Activated B cell treated with CpG ODN at 0.5 μM for 24 hours (primary cell): ENCODE measurements at regions of chr13 and their contacts with region 1.

Region 1: GRCh38 chr13:42271337-42272114 is 426 bp upstream of the AKAP11 start:
- DNase-seq: peak; percentile 85
- ATAC-seq: peak; percentile 83
- H3K4me3 Mint-ChIP-seq: peak overlapping the region; percentile 97
- H3K27ac Mint-ChIP-seq: peak overlapping the region; percentile 97
- H3K4me1 Mint-ChIP-seq: peaks cover 54% of the 10 kb centered on the region
- H3K27me3 Mint-ChIP-seq: no peaks in the 10 kb centered on the region
- CTCF ChIP-seq: no peak

Region 2: GRCh38 chr13:41132512-41133152 is 1138.9 kb before region 1 on chr13 and contains the start of gene KBTBD6:
- CTCF ChIA-PET with region 1: no interaction called
- POLR2A ChIA-PET with region 1: no interaction called
- intact Hi-C with region 1: loop called (anchors 1 kb)
- DNase-seq: peak; percentile 83
- ATAC-seq: peak; percentile 97
- H3K4me3 Mint-ChIP-seq: peak within 1 kb of the TSS; percentile 98
- H3K27ac Mint-ChIP-seq: peak within 1 kb of the TSS; percentile 91
- H3K4me1 Mint-ChIP-seq: peaks cover 47% of the 10 kb centered on the region
- H3K27me3 Mint-ChIP-seq: no peaks in the 10 kb centered on the region
- CTCF ChIP-seq: no peak
- total RNA-seq, gene KBTBD6: 5.1 and 6.0 TPM in 2 replicates

Region 3: GRCh38 chr13:41310963-41311606 is 960.4 kb before region 1 on chr13 and contains the start of gene NAA16:
- CTCF ChIA-PET with region 1: no interaction called
- POLR2A ChIA-PET with region 1: interaction called, 3 read pairs
- intact Hi-C with region 1: loop called (anchors 5 kb)
- DNase-seq: peak; percentile 98
- ATAC-seq: peak; percentile 92
- H3K4me3 Mint-ChIP-seq: peak within 1 kb of the TSS; percentile 96
- H3K27ac Mint-ChIP-seq: peak within 1 kb of the TSS; percentile 90
- H3K4me1 Mint-ChIP-seq: peaks cover 44% of the 10 kb centered on the region
- H3K27me3 Mint-ChIP-seq: no peaks in the 10 kb centered on the region
- CTCF ChIP-seq: no peak
- total RNA-seq, gene NAA16: 18.5 and 21.4 TPM in 2 replicates

Region 4: DNA sequence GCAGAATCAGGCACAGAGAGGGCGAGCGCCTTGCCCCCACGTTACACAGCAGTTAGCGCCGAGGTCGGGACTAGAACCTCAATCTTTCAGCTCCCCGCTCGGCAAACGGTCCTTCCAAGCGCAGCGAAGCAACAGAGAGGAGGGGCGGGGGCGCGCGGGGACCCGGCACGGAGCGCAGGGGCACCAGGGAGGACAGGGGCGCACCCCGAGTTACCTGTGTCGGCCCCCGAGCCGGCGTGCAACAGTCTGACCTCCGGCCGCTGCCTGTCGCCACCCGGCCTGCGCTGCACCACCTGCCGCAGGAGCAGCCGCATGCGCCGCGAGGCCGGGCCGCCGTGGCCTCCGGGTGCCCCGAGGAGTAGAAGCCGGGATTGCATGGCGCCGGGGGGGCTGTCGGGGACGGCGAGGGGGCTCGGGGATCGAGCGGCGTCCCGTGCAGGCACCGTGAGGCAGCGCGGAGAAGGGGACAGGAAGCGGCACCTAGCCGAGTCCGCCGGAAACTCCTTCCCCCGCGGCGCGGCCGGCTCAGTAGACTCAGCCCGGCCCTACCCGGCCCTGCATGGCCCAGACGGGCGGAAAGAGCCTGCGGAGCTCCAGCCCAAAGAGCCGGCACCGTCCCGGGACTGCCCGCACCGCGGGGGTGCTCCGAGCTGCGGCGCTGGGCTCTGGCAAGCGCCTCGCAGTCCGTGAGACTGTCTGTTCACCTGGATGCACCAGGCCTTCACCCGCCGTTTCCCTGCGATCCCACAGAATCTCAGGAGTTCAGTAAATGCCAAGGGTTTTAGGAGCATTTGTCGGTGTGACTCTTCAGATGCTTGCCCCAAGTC is 310.7 kb before region 1 on chr13 and contains the start of gene VWA8:
- CTCF ChIA-PET with region 1: no interaction called
- POLR2A ChIA-PET with region 1: interaction called, 3 read pairs
- intact Hi-C with region 1: loop called (anchors 2 kb)
- DNase-seq: peak; percentile 79
- ATAC-seq: peak; percentile 98
- H3K4me3 Mint-ChIP-seq: peak within 1 kb of the TSS; percentile 91
- H3K27ac Mint-ChIP-seq: peak within 1 kb of the TSS; percentile 66
- H3K4me1 Mint-ChIP-seq: peaks cover 26% of the 10 kb centered on the region
- H3K27me3 Mint-ChIP-seq: peaks cover 4% of the 10 kb centered on the region
- CTCF ChIP-seq: no peak
- total RNA-seq, gene VWA8: 16.5 and 21.7 TPM in 2 replicates

Region 5: DNA sequence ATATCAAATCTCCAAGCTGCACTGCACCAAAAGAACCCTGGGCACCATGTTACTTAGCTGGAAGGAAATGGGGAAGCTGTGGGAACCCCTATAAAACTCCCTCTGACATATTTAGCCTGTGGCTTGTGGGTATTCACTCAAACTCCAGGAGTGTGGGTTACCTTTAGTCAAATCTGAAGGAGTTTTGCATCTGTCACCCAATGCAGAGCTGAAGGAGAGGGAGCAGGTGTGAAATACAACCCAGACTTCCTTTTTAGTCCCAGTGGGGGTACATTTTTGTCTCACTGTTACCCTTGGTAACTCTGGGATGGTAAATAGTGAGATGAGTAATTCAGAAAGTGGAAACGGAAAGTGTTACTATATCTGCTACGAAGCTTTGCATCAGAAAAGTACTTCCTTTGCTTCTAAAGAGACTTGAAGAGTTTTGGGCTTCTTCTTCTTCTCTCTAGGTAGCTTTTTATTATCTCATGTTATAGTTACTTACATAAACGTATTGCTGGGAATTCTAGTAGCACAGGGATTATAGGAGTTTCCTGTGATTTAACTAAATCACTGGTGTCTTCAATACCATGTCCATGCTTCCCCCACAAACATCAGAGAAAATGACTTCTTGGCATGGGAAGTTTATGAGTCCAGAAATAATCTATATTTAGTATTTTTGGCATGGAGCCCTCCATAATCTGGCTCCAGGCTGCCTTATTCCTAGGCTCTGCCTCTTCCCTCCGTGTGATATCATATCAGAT is 106.3 kb after region 1 on chr13:
- CTCF ChIA-PET with region 1: no interaction called
- POLR2A ChIA-PET with region 1: interaction called, 47 read pairs
- intact Hi-C with region 1: loop called (anchors 1 kb)
- DNase-seq: no peak
- ATAC-seq: peak; percentile 74
- H3K4me3 Mint-ChIP-seq: peak overlapping the region; percentile 60
- H3K27ac Mint-ChIP-seq: peak overlapping the region; percentile 91
- H3K4me1 Mint-ChIP-seq: peaks cover 54% of the 10 kb centered on the region
- H3K27me3 Mint-ChIP-seq: no peaks in the 10 kb centered on the region
- CTCF ChIP-seq: no peak

Region 6: DNA sequence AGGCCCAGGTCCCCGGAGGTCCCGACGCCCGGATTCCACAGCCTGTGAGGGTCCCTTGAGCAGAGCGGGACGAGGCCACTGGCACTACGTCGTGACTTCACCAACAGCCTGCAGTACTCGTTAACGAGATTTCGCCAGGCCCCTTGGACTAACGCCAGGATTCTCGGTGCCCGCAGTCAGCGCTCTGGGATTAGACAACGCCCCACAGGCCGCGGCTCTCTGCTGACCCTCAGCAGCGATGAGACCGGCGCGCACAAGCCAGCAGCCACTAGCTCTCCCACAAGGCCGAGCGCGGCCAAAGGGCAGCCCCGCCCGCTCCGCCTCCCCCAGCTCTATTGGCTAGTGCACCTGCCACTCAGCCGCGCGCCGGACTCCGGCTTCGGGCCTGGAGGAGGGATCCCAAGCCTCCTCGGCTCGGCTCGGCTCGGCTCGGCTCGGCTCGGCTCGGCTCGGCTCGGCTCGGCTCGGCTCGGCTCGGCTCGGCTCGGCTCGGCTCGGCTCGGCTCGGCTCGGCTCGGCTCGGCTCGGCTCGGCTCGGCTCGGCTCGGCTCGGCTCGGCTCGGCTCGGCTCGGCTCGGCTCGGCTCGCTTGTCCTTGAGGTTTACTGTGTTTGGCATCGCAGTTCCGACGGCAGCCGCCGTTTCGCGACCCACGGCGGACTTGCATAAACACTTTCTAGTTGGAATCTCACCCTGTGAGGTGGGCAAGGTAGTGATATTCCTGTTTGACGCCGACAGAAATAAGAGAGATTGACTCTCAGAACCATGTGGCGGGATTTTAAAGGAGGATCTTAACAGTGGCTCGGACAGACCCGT is 1870.4 kb after region 1 on chr13:
- CTCF ChIA-PET with region 1: no interaction called
- POLR2A ChIA-PET with region 1: no interaction called
- intact Hi-C with region 1: loop called (anchors 10 kb)
- DNase-seq: peak; percentile 100
- ATAC-seq: peak; percentile 99
- H3K4me3 Mint-ChIP-seq: peak overlapping the region; percentile 93
- H3K27ac Mint-ChIP-seq: peak overlapping the region; percentile 86
- H3K4me1 Mint-ChIP-seq: peaks cover 29% of the 10 kb centered on the region
- H3K27me3 Mint-ChIP-seq: peaks cover 8% of the 10 kb centered on the region
- CTCF ChIP-seq: no peak